K562 (cell line): ENCODE measurements at regions of chr10 and their contacts with region 1.

Region 1: DNA sequence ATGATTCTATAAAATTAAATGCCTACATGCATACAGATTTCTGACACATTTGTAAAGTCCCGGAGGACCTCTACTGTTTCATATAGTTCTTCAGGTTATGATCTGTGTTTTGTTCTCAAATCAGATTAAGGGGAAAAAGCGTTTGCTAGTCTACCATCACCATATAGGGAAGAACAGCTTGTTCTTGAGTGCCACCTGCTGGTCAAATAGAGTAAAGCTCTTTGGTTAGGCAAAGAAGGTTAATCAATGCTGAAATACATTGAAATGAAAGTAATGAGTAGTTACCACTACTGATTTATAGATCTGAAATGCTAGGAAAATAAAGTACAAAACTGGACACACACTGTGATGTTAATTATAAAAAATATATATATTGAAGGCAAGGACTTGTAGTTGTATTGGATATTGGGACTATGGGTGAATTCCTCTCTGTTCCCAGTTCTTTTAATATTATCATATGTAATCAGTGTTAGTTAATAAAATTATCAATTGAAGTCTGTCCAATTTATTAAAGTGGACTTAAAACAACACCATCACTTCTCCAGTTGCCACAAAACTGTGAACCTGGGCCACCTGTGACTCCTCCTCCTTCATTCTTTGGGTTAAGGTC is 72.6 kb upstream of the PDLIM1 start:
- DNase-seq: peak; percentile 58 to 74 (median 60)
- ATAC-seq: peak; percentile 79
- H3K4me3 ChIP-seq: no peak overlapping the region
- H3K27ac ChIP-seq: no peak overlapping the region
- H3K4me1 ChIP-seq: peaks cover 0 to 6% of the 10 kb centered on the region in 2 experiments; a peak in 3 of 5 replicates
- H3K27me3 ChIP-seq: no peaks in the 10 kb centered on the region
- CTCF ChIP-seq: peak; percentile 66 to 84 (median 72); a peak in 5 of 6 replicates
- EP300 ChIP-seq: no peak
- POLR2A ChIP-seq: no peak
- RAD21 ChIP-seq: peak; percentile 96 to 99

Region 2: GRCh38 chr10:95133016-95133752 is 230.2 kb before region 1 on chr10:
- CTCF ChIA-PET with region 1: interaction called, 13 read pairs
- POLR2A ChIA-PET with region 1: interaction called, 3 read pairs
- in situ Hi-C with region 1: loop called (anchors 10 kb)
- intact Hi-C with region 1: loop called (anchors 1 kb)
- DNase-seq: peak; percentile 57 to 86 (median 60)
- ATAC-seq: peak; percentile 93
- H3K4me3 ChIP-seq: no peak overlapping the region
- H3K27ac ChIP-seq: no peak overlapping the region
- H3K4me1 ChIP-seq: no peaks in the 10 kb centered on the region
- H3K27me3 ChIP-seq: no peaks in the 10 kb centered on the region
- CTCF ChIP-seq: peak; percentile 71 to 86 (median 76)
- EP300 ChIP-seq: no peak
- POLR2A ChIP-seq: no peak
- RAD21 ChIP-seq: peak; percentile 69 to 88

Region 3: DNA sequence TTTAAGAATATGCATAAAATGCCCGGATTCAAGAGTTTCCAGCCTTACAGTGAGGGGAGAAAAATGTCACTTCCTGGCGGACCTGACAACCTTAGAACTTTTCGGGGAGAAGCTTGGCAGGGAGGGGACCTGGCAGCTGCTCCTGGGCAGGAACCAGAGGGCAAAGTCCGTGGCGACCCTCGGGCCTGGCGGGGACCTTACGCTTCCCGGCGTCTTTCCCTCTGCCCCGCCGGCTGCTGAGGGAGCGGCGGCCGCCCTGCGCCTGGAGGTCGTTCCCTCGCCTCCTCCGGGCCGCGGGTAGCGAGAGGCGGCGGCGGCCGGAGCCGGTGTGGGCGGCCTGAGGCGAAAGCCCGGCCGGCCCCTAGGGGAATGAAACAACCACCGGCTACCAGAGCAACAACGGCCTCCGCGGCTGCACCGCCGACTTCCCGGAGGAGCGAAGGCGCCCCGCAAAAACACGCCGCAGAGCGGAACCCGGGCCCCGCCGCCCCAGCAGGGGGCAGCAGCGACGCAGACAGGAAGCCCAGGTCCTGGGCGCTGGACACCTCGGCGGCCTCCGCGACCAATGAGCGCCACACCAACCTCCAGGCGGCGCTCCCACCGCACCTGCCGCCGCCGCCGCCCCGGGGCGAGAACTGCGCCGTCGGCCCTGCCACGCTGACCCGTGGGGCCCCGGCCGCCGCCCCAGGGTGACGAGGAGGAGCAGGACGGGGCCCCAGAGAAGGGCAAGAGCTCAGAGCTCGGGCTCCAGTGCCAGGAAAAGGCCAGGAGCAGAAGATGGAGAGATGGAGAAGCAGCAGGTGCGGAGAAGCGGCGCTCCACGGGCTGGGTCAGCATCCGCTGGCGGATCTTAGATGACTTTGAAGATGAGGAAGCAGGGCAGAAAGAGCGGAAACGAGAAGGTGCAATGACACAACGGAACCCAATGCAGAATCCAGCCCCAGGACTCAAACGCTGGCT is 179.9 kb before region 1 on chr10:
- CTCF ChIA-PET with region 1: interaction called, 14 read pairs
- POLR2A ChIA-PET with region 1: no interaction called
- in situ Hi-C with region 1: no loop called
- intact Hi-C with region 1: loop called (anchors 5 kb)
- DNase-seq: peak; percentile 85 to 91 (median 88)
- ATAC-seq: peak; percentile 100
- H3K4me3 ChIP-seq: peak overlapping the region; percentile 63
- H3K27ac ChIP-seq: peak overlapping the region; percentile 48; the same call in 1 of the 3 replicates
- H3K4me1 ChIP-seq: peaks cover 0 to 10% of the 10 kb centered on the region in 2 experiments; a peak in 2 of 5 replicates
- H3K27me3 ChIP-seq: no peaks in the 10 kb centered on the region; a peak in 2 of 5 replicates
- CTCF ChIP-seq: peak; percentile 77 to 98 (median 93)
- EP300 ChIP-seq: no peak
- POLR2A ChIP-seq: peak; percentile 70
- RAD21 ChIP-seq: peak; percentile 75

Region 4: DNA sequence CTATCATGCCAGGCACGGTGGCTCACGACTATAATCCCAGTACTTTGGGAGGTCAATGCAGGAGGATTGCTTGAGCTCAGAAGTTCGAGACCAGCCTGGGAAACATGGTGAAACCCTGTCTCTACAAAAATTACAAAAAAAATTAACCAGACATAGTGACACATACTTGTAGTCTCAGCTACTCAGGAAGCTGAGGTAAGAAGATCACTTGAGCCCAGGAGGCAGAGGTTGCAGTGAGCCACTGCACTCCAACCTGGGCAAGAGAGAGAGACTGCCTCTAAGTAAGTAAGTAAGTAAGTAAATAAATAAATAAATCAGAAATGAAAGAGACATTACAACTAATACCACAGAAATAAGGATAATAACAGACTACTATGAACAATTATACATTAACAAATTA is 108.8 kb before region 1 on chr10:
- CTCF ChIA-PET with region 1: interaction called, 56 read pairs
- POLR2A ChIA-PET with region 1: no interaction called
- in situ Hi-C with region 1: loop called (anchors 5 kb)
- intact Hi-C with region 1: no loop called
- DNase-seq: no peak
- ATAC-seq: no peak
- H3K4me3 ChIP-seq: no peak overlapping the region
- H3K27ac ChIP-seq: no peak overlapping the region
- H3K4me1 ChIP-seq: no peaks in the 10 kb centered on the region; a peak in 1 of 5 replicates
- H3K27me3 ChIP-seq: no peaks in the 10 kb centered on the region
- CTCF ChIP-seq: no peak
- EP300 ChIP-seq: no peak
- POLR2A ChIP-seq: no peak
- RAD21 ChIP-seq: no peak

Region 5: DNA sequence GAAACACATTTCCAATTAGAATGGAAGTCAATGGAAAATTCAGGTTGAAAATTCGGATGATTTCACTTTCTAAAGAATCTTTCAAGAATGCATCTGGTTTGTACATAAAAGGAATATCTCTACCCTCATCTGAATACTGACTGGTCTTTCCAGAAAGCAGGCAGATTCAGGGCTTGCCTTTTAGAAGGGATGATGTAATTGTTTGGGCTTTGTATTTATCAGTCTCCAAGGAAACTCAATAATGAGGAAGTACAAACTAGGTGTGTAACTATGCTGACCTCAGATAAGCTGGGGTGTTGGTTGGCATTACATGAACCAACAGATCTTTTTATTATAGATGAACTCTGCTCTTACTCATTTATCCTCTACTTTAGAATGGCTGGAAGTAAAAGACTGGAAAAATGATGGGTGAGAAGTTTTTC is 96.7 kb before region 1 on chr10:
- CTCF ChIA-PET with region 1: no interaction called
- POLR2A ChIA-PET with region 1: no interaction called
- in situ Hi-C with region 1: no loop called
- intact Hi-C with region 1: no loop called
- DNase-seq: peak; percentile 60 to 72 (median 64)
- ATAC-seq: peak; percentile 90
- H3K4me3 ChIP-seq: no peak overlapping the region
- H3K27ac ChIP-seq: peak overlapping the region; percentile 64
- H3K4me1 ChIP-seq: peaks cover 0 to 17% of the 10 kb centered on the region in 2 experiments; a peak in 3 of 5 replicates
- H3K27me3 ChIP-seq: no peaks in the 10 kb centered on the region
- CTCF ChIP-seq: no peak
- EP300 ChIP-seq: peak; percentile 81
- POLR2A ChIP-seq: no peak
- RAD21 ChIP-seq: no peak

Region 6: DNA sequence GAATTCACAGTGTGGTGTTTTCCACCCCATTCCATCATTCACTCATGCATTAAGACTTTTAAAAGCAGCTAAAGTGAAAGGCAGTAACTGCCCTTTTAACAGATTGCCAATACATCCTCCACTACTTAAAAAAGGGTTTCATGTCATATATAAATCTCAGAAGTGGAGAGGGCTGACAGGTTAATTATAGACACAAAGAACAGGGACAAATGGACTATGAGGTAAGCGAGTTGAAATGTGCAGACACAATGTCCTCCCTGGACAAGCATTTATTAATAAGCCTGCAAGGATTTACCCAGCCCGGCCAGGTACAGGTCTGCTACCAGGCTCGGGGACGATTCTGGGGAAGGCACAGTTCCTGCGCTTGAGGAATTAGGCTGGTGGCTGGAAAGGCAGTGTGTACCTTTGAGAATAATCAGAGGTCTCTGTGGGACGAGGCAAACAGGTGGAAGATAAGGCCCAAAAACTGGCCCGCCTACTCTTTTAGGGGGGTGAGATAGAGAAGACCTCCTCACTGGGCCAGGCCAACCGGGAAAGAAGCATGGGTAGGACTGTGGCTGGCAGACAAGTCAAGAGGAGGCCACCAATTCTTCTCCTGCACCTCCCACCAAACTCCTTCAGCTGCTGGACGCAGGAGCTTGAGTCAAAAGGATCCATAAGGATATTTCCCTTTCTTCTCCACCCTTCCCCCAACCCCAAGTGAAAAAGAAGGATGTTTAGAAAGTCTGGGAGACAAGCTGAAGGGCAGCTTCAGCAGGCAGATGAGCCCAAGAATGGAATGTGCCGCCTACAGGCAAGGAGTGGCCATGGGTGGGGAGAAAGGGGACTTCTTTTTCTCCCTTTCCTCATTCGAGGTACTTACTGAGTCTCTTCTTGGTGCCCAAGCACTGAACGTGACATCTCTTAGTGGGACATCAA is 74.1 kb before region 1 on chr10:
- CTCF ChIA-PET with region 1: no interaction called
- POLR2A ChIA-PET with region 1: no interaction called
- in situ Hi-C with region 1: no loop called
- intact Hi-C with region 1: loop called (anchors 5 kb)
- DNase-seq: peak; percentile 36 to 58 (median 43)
- ATAC-seq: peak; percentile 66
- H3K4me3 ChIP-seq: peak overlapping the region; percentile 88
- H3K27ac ChIP-seq: peak overlapping the region; percentile 87; the same call in 2 of the 3 replicates
- H3K4me1 ChIP-seq: peaks cover 24 to 30% of the 10 kb centered on the region in 2 experiments; a peak in 4 of 5 replicates
- H3K27me3 ChIP-seq: no peaks in the 10 kb centered on the region
- CTCF ChIP-seq: peak; percentile 28 to 50 (median 47); a peak in 5 of 6 replicates
- EP300 ChIP-seq: no peak
- POLR2A ChIP-seq: no peak
- RAD21 ChIP-seq: peak; percentile 11 to 41; a peak in 2 of 4 replicates

Region 7: GRCh38 chr10:95513941-95514392 is 150.6 kb after region 1 on chr10:
- CTCF ChIA-PET with region 1: no interaction called
- POLR2A ChIA-PET with region 1: no interaction called
- in situ Hi-C with region 1: no loop called
- intact Hi-C with region 1: no loop called
- DNase-seq: no peak
- ATAC-seq: no peak
- H3K4me3 ChIP-seq: no peak overlapping the region
- H3K27ac ChIP-seq: no peak overlapping the region
- H3K4me1 ChIP-seq: peaks cover 14 to 43% of the 10 kb centered on the region in 2 experiments
- H3K27me3 ChIP-seq: no peaks in the 10 kb centered on the region
- CTCF ChIP-seq: no peak
- EP300 ChIP-seq: no peak
- POLR2A ChIP-seq: no peak
- RAD21 ChIP-seq: no peak